ENCODE measurements at regions of chr1 and their contacts with region 1.

Region 1: GRCh38 chr1:37486680-37487618 is 12.6 kb downstream of the ZC3H12A start:
- DNase-seq: peak in 1 of 2 experiments; percentile 97
- H3K4me3 ChIP-seq: no peak overlapping the region
- H3K27ac ChIP-seq: no peak overlapping the region
- H3K4me1 ChIP-seq: peaks cover 0 to 5% (median 1%) of the 10 kb centered on the region in 4 experiments; a peak in 3 of 7 replicates
- H3K27me3 ChIP-seq: no peaks in the 10 kb centered on the region
- CTCF ChIP-seq: peak; percentile 88 to 98 (median 93)
- EP300 ChIP-seq: no peak
- POLR2A ChIP-seq: no peak
- RAD21 ChIP-seq: peak; percentile 83 to 85

Region 2: DNA sequence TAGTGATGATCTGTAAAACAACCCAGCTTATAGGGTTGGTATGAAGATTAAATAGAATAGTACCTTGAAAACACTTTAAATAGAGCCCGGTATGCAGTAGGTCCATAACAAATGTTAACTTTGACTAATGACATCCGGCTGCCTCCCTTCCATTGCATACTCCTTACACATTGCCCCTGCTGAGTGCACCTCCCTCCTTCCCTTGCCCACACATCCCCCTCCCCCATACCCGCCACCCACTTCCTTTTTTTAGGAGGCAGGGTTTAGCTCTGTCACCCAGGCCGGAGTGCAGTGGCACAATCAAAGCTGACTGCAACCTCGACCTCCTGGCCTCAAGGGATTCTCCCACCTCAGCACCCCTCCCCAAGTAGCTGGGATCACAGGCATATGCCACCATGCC is 37.0 kb before region 1 on chr1:
- CTCF ChIA-PET with region 1: interaction called, 382 read pairs
- POLR2A ChIA-PET with region 1: interaction called, 21 read pairs
- DNase-seq: no peak
- H3K4me3 ChIP-seq: no peak overlapping the region
- H3K27ac ChIP-seq: no peak overlapping the region
- H3K4me1 ChIP-seq: peaks cover 0 to 23% (median 9%) of the 10 kb centered on the region in 4 experiments; a peak in 6 of 7 replicates
- H3K27me3 ChIP-seq: no peaks in the 10 kb centered on the region; a peak in 1 of 7 replicates
- CTCF ChIP-seq: no peak
- EP300 ChIP-seq: no peak
- POLR2A ChIP-seq: no peak
- RAD21 ChIP-seq: no peak

Region 3: GRCh38 chr1:37474046-37474759 is 12.7 kb before region 1 on chr1 and contains the start of gene ZC3H12A:
- CTCF ChIA-PET with region 1: interaction called, 83 read pairs
- POLR2A ChIA-PET with region 1: interaction called, 68 read pairs
- DNase-seq: peak; percentile 70 to 88
- H3K4me3 ChIP-seq: peak within 1 kb of the TSS; percentile 46 to 76 (median 62)
- H3K27ac ChIP-seq: no peak within 1 kb of the TSS
- H3K4me1 ChIP-seq: peaks cover 6 to 60% (median 36%) of the 10 kb centered on the region in 4 experiments
- H3K27me3 ChIP-seq: peaks cover 1 to 13% (median 9%) of the 10 kb centered on the region in 4 experiments; a peak in 6 of 7 replicates
- CTCF ChIP-seq: no peak
- EP300 ChIP-seq: no peak
- POLR2A ChIP-seq: peak in 1 of 2 experiments; percentile 86; a peak in 2 of 3 replicates
- RAD21 ChIP-seq: no peak
- total RNA-seq, gene ZC3H12A: 7.4 TPM in 2 replicates

Region 4: GRCh38 chr1:37509181-37509580 is 22.2 kb after region 1 on chr1:
- CTCF ChIA-PET with region 1: interaction called, 17 read pairs
- POLR2A ChIA-PET with region 1: interaction called, 14 read pairs
- DNase-seq: no peak
- H3K4me3 ChIP-seq: no peak overlapping the region
- H3K27ac ChIP-seq: no peak overlapping the region
- H3K4me1 ChIP-seq: peaks cover 0 to 6% (median 3%) of the 10 kb centered on the region in 4 experiments; a peak in 4 of 7 replicates
- H3K27me3 ChIP-seq: no peaks in the 10 kb centered on the region
- CTCF ChIP-seq: peak in 2 of 3 experiments; percentile 17 to 33; a peak in 2 of 4 replicates
- EP300 ChIP-seq: no peak
- POLR2A ChIP-seq: no peak
- RAD21 ChIP-seq: 0 out of 4 replicates have a peak, but pooled peaks of 1 of the 2 experiments have one; percentile 11

Region 5: GRCh38 chr1:37537378-37537777 is 50.4 kb after region 1 on chr1:
- CTCF ChIA-PET with region 1: interaction called, 12 read pairs
- POLR2A ChIA-PET with region 1: no interaction called
- DNase-seq: no peak
- H3K4me3 ChIP-seq: no peak overlapping the region
- H3K27ac ChIP-seq: no peak overlapping the region
- H3K4me1 ChIP-seq: no peaks in the 10 kb centered on the region
- H3K27me3 ChIP-seq: no peaks in the 10 kb centered on the region
- CTCF ChIP-seq: no peak
- EP300 ChIP-seq: no peak
- POLR2A ChIP-seq: no peak
- RAD21 ChIP-seq: no peak